ENCODE measurements at regions of chr12 and their contacts with region 1.

Region 1: GRCh38 chr12:64451687-64452558 is at the start of gene TBK1:
- DNase-seq: peak; percentile 96
- ATAC-seq: peak; percentile 99
- total RNA-seq, gene TBK1: 11.9 TPM

Region 2: DNA sequence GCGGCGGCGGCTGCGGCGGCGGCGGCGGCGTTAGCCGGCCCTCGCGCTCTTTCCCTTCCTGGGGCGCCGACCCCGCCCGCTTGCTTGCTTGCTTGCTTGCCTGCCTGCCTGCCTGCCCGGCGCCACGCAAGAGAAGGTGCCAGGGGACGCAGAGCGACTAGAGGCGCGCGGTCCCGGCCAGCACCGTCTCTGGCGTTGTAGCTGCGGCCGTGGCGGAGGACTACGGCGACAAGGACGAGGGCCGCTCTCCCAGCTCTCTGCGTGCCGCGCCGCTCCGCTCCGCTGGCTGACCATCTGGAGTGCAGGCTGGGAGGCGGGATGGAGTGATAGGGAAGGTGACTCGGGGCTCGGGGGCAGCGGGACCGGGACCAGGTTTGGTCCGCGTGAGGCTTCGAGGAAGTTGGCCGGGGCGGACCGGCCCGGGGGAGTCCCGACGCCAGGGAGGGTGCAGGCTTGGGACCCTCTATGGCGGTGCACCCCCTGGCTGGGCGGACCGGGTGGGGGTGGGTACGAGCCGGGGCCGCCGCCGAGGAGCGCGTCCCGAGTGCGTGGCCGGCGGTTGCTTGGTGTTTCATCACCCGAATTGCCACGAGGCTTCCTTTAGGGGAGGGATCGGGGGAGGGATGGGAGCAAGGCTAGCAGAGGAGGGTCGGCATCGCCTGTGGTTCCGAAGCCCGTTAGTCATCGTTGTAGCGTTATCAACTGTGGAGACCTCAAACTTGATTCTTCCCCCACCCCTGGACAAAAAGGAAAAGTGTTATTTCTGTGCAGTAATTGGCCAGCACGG is 47.3 kb before region 1 on chr12:
- intact Hi-C with region 1: loop called (anchors 5 kb)
- DNase-seq: no peak
- ATAC-seq: peak; percentile 53

Region 3: DNA sequence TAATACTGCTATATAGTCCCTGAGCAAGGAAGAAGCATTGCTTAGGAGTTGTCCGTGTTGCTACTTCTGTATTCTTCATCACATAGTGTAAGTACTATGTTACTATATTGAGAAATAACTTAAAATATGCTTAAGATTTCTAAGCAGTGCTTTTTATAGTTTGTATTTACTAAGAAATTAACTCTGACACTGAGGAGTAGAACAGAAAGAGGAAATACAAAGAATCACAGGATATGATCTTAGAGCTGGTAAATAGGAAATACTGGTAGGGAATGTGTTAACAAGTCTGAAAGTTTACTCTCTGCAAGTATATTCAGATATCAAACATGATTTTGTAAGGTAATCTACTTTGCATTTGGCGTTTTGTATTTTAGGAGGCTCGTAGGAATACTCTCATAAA is 32.2 kb before region 1 on chr12:
- intact Hi-C with region 1: no loop called
- DNase-seq: no peak
- ATAC-seq: no peak

Region 4: GRCh38 chr12:64469455-64470142 is 17.7 kb after region 1 on chr12:
- intact Hi-C with region 1: no loop called
- DNase-seq: no peak
- ATAC-seq: peak; percentile 74